Pancreas (tissue), 10 donors: ENCODE measurements at regions of chr16 and their contacts with region 1.

Region 1: DNA sequence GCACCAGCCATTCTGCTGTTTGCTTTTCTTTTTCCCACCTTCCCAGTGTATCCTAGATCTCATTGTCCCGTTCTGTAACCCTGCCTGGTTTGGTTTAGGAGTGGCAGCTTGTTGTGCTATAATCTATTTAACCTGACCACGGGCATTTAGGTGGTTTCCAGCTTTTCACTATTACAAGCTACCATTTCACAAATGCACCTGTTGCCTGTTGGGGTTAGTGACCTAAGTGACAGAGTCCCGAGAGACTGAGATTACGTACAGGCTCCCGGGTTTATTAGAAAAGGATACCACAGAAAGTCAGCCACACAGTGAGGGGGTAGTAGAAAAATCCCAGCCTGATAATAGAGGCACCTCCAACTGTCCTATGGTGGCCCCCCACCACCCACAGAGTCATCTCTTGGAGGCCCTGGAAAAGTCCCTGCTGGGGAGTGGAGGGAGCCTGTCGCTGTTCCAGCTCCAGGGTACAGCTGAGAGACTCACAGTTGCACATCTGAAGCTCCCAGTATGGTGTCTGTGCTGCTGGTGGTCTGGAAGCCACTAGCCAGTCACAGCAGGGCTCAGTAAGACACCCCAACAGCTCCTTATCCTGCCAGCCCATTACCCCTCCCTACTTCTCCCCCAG is 21.2 kb downstream of the CLEC16A start:
- DNase-seq: no peak
- ATAC-seq: no peak
- H3K4me3 ChIP-seq: no peak overlapping the region
- H3K27ac ChIP-seq: no peak overlapping the region
- H3K4me1 ChIP-seq: peaks cover 0 to 6% (median 0%) of the 10 kb centered on the region in 3 donors
- H3K27me3 ChIP-seq: no peaks in the 10 kb centered on the region
- CTCF ChIP-seq: no peak

Region 2: DNA sequence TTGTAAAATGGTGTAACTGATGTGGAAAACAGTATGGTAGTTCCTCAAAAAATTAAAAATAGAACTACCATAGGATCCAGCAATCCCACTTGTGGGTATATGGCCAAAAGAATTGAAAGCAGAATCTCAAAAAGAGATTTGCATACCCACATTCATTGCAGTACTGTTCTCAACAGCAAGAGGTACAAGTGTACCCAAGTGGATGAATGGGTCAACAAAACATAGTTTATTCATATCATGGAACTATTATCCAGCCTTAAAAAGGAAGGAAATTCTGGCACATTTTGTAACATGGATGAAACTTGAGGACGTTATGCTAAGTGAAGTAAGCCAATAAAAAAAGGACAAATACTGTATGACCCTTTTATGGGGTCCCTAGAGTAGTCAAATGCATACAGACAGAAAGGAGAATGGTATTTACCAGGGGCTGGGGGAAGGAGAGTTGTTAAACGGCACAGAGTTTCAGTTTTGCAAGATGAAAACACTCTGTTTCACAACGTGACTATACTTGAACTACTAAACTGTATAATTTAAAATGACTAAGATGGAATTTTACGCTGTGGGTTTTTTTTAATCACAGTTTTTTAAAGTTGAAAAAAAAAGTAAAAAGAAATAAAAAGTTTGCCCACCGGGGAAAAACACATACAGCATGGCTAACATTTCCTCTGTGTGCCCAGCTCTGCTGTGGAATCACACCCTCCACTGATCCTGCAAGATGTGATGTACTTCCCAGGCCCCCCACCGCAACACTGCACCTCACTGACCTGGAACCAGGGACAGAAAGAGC is 153.0 kb before region 1 on chr16:
- intact Hi-C with region 1: no loop called
- DNase-seq: no peak
- ATAC-seq: no peak
- H3K4me3 ChIP-seq: no peak overlapping the region
- H3K27ac ChIP-seq: no peak overlapping the region
- H3K4me1 ChIP-seq: no peaks in the 10 kb centered on the region
- H3K27me3 ChIP-seq: no peaks in the 10 kb centered on the region
- CTCF ChIP-seq: no peak

Region 3: DNA sequence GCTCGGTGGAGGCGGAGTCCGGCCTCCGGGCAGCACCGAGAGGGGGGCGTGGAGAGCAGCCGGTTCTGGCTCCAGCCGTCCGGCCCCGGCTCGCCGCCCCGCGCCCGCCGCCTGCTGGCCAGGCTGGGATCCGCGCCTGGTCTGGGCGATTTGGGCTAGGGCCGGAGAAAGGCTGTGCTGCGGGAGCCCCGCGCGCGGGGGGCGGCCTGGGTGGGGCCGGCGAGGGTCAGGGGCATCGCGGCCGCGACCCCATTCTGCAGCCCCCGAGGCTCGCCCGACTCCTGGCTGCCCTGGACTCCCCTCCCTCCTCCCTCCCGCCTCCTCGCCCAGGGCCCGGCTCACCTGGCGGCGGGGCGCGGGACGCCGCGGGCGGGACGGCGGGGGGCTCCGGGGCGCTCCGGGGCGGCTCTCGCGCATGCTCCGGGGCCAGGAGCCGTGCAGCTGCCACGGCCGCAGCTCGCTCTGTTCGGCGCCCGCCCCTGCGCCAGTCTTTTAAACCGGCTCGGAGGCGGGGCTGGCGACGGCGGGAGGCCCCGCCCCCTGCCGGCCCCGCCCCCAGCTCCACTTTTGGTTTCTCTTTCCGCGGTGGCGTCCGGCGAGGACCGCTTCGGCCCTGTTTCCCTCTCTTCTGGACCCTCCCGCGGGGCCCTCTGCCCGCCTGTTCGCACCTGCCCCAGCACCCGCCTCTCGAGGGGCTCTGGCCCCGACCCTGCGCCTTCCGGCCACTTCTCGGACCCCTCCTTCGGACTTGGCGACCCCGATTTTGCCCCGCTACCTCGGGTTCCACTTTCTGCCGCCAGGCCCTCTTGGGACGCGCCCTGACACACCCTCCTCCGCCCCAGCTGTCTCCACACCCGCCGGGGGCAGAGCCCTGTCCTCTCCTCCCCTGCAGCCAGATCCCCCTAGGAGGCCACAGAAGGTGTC is 290.4 kb after region 1 on chr16 and contains the start of gene SOCS1:
- intact Hi-C with region 1: loop called in 2 of 3 experiments (anchors 5 kb)
- DNase-seq: peak; percentile 79 to 94 (median 88)
- ATAC-seq: peak; percentile 80 to 87 (median 84)
- H3K4me3 ChIP-seq: peak within 1 kb of the TSS; percentile 59 to 83 (median 72)
- H3K27ac ChIP-seq: peak within 1 kb of the TSS; percentile 82 to 97 (median 90)
- H3K4me1 ChIP-seq: peaks cover 3 to 17% (median 11%) of the 10 kb centered on the region in 3 donors
- H3K27me3 ChIP-seq: no peaks in the 10 kb centered on the region
- CTCF ChIP-seq: peak; percentile 81 to 95 (median 90)
- total RNA-seq, gene SOCS1: 1.3 to 7.9 (median 1.8) TPM